Left cardiac atrium (tissue), 4 donors: ENCODE measurements at regions of chr3 and their contacts with region 1.

Region 1: GRCh38 chr3:38136777-38137614 is at the start of gene ACAA1:
- DNase-seq: peak; percentile 100
- ATAC-seq: peak; percentile 95 to 97
- total RNA-seq, gene ACAA1: 73.8 to 80.8 TPM

Region 2: DNA sequence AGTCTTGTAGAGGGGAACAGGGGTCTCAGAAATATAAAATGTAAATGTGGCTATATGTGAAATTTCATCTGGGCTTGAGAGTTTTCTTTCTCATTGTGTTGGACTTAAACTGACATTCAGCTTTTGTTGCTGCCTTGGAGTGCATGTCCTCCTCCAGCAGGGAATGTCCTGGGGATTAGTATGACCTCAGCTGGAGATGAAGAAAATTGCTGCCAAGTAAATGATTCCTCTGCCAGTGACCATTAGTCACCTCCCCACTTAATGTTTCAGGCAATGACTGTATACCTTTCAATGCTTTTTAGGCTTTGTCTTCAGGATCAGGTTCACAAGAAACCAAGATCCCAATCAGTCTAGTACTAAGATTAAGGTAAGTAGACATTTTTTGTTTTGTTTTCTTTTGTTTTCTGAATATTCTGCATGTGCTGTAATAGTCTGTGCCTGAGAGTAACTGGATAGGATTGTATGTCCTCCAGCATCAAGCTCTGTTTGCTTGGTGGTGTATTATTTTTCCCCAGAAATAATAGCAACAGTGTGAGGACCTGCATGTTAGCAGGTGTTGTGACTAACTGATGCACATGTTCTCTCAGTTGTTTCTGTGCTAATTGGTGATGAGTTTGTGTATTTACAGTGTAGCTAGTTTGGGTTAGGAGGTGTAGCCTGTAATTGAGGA is 110.5 kb after region 1 on chr3:
- intact Hi-C with region 1: loop called in 1 of 2 experiments (anchors 10 kb)
- DNase-seq: no peak
- ATAC-seq: peak; percentile 84 to 95